ENCODE measurements at regions of chr14 and their contacts with region 1.

Region 1: GRCh38 chr14:81464247-81465002 is 64.3 kb upstream of the STON2 start:
- DNase-seq: peak; percentile 79
- H3K4me3 ChIP-seq: peak overlapping the region; percentile 38 to 86 (median 41)
- H3K27ac ChIP-seq: no peak overlapping the region
- H3K4me1 ChIP-seq: no peaks in the 10 kb centered on the region
- H3K27me3 ChIP-seq: no peaks in the 10 kb centered on the region
- CTCF ChIP-seq: peak; percentile 68 to 82
- POLR2A ChIP-seq: no peak

Region 2: GRCh38 chr14:81406863-81407262 is 57.6 kb before region 1 on chr14:
- CTCF ChIA-PET with region 1: no interaction called
- POLR2A ChIA-PET with region 1: no interaction called
- dilution Hi-C with region 1: no loop called
- intact Hi-C with region 1: no loop called
- DNase-seq: no peak
- H3K4me3 ChIP-seq: no peak overlapping the region
- H3K27ac ChIP-seq: no peak overlapping the region
- H3K4me1 ChIP-seq: no peaks in the 10 kb centered on the region
- H3K27me3 ChIP-seq: no peaks in the 10 kb centered on the region
- CTCF ChIP-seq: no peak
- POLR2A ChIP-seq: no peak

Region 3: DNA sequence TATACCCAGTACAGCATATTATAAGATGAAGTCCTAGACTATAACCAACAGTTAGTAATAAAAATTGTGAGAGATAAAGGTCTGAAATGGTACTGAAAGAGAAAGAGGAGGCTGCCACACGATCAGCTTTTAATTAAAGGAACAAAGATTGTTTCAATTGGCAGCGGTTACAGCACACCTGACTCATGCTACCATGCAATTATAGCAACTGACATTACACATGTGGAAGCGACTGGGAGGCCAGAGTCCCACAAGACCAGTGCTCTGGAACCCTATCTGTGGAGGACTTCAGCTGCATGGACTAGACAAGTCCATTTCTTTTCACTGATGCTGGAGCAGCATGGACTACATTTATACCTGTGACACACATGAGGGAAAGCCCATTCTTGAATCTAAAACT is 14.0 kb after region 1 on chr14:
- CTCF ChIA-PET with region 1: interaction called, 14 read pairs
- POLR2A ChIA-PET with region 1: no interaction called
- dilution Hi-C with region 1: no loop called
- intact Hi-C with region 1: no loop called
- DNase-seq: no peak
- H3K4me3 ChIP-seq: no peak overlapping the region
- H3K27ac ChIP-seq: no peak overlapping the region
- H3K4me1 ChIP-seq: no peaks in the 10 kb centered on the region
- H3K27me3 ChIP-seq: no peaks in the 10 kb centered on the region
- CTCF ChIP-seq: no peak
- POLR2A ChIP-seq: no peak

Region 4: GRCh38 chr14:81801921-81802320 is 337.5 kb after region 1 on chr14:
- CTCF ChIA-PET with region 1: no interaction called
- POLR2A ChIA-PET with region 1: no interaction called
- dilution Hi-C with region 1: no loop called
- intact Hi-C with region 1: no loop called
- DNase-seq: no peak
- H3K4me3 ChIP-seq: no peak overlapping the region
- H3K27ac ChIP-seq: no peak overlapping the region
- H3K4me1 ChIP-seq: no peaks in the 10 kb centered on the region
- H3K27me3 ChIP-seq: no peaks in the 10 kb centered on the region
- CTCF ChIP-seq: no peak
- POLR2A ChIP-seq: no peak

Measured in endothelial cell of umbilical vein (primary cell).